AG04450 (cell line): ENCODE measurements at regions of chr11 and their contacts with region 1.

Region 1: GRCh38 chr11:123103326-123103980 is 41.5 kb upstream of the HSPA8 start:
- DNase-seq: peak; percentile 34
- H3K4me3 ChIP-seq: no peak overlapping the region
- H3K27ac ChIP-seq: no peak overlapping the region
- H3K27me3 ChIP-seq: no peaks in the 10 kb centered on the region
- CTCF ChIP-seq: peak; percentile 64

Region 2: GRCh38 chr11:122910775-122911174 is 192.7 kb before region 1 on chr11:
- CTCF ChIA-PET with region 1: no interaction called
- POLR2A ChIA-PET with region 1: no interaction called
- DNase-seq: no peak
- H3K4me3 ChIP-seq: no peak overlapping the region
- H3K27ac ChIP-seq: no peak overlapping the region
- H3K27me3 ChIP-seq: peaks cover 7% of the 10 kb centered on the region
- CTCF ChIP-seq: peak; percentile 36

Region 3: GRCh38 chr11:122937983-122938382 is 165.5 kb before region 1 on chr11:
- CTCF ChIA-PET with region 1: no interaction called
- POLR2A ChIA-PET with region 1: no interaction called
- DNase-seq: no peak
- H3K4me3 ChIP-seq: no peak overlapping the region
- H3K27ac ChIP-seq: no peak overlapping the region
- H3K27me3 ChIP-seq: peaks cover 8% of the 10 kb centered on the region
- CTCF ChIP-seq: no peak

Region 4: DNA sequence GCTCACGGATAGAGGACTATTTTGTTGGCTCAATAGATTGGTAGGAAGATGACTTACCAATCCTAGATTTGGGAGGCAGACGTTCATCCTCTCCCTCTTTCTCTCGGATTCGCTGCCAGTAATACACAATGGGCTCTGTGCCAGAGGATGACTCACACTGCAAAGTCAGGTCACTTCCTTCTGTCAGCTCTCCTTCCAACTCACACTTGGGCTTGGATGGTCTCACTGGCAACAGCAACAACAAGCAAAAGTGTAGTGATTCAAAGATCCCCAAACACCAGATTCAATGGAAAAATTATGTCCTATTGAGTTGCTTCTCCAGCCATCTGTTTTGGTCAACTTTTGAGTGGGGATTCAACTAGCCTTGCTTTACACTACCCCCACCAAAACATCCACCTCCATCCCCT is 19.8 kb before region 1 on chr11:
- CTCF ChIA-PET with region 1: interaction called, 12 read pairs
- POLR2A ChIA-PET with region 1: no interaction called
- DNase-seq: peak; percentile 90
- H3K4me3 ChIP-seq: no peak overlapping the region
- H3K27ac ChIP-seq: peak overlapping the region; percentile 71
- H3K27me3 ChIP-seq: no peaks in the 10 kb centered on the region
- CTCF ChIP-seq: no peak